ENCODE measurements at regions of chr19 and their contacts with region 1.

Region 1: DNA sequence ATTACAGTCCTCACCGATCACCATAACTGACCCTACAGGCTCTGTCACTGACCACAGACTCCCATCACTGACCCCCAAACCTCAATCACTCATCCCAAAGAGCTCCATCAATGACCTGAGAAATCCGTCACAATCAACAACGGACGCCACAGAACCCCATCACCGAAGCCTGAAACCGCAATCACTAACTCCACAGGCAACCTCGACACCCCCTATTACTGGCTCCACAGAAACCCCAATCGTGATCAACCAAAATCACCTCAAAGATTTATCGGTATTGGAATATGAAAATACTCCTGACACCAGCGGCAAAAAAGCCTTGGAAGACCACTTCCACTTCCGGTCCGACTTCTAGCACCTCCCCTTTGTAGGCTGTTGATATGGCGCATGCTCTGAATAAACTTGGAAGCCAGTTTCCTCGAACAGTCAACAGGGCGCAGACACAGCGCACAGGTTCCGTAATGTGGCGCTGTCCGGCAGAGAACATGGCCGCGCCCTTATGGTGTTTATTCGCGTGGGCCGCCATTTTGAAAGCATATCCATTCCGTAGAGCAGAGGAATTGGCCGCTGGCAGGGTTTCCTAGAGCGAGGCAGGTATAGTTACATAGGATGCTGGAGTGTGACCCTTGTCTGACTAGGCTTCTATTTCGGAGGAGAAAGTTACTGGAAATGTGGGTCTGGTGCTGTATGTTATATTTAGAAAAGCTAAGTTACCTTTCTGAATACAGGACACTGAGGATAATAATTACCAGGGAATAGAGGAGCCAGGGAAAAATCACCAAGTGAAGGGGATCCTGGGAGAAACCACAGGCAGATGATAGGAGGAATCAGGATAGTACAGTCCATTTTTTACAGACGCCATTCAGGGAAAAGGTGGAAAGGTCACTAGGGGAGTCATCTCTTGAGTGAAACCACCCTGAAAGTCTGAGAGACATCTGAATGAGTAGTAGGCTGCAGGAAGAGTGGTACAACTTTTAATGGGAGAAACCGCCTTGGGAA is at the start of gene ZNF585A:
- DNase-seq: peak; percentile 94
- H3K4me3 Mint-ChIP-seq: no peak within 1 kb of the TSS
- H3K27ac Mint-ChIP-seq: no peak within 1 kb of the TSS
- H3K4me1 Mint-ChIP-seq: no peaks in the 10 kb centered on the region
- H3K27me3 Mint-ChIP-seq: no peaks in the 10 kb centered on the region
- total RNA-seq, gene ZNF585A: 2.7 and 3.9 TPM in 2 replicates

Region 2: GRCh38 chr19:36973021-36973843 is 199.4 kb before region 1 on chr19:
- intact Hi-C with region 1: loop called (anchors 1 kb)
- DNase-seq: peak; percentile 92
- H3K4me3 Mint-ChIP-seq: peak overlapping the region; percentile 99
- H3K27ac Mint-ChIP-seq: peak overlapping the region; percentile 92
- H3K4me1 Mint-ChIP-seq: peaks cover 12% of the 10 kb centered on the region
- H3K27me3 Mint-ChIP-seq: no peaks in the 10 kb centered on the region

Region 3: DNA sequence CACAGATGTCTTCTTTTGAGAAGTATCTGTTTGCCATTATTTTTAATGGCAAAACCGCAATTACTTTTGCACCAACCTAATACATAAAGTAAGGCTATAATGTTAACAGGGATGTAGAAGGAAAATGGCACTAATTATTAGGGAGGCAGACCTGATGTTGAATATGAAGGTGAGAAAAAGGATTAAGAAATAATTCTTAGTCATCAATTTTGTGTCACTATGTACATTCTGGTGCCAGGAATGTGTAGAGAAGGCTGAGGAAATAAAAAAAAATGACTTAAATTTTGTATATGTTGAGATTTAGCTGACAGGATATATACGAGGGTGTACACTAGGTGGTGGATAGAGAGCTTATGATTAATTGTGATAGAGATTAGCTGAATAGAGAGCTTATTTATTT is 25.1 kb after region 1 on chr19:
- intact Hi-C with region 1: no loop called
- DNase-seq: no peak
- H3K4me3 Mint-ChIP-seq: no peak overlapping the region
- H3K27ac Mint-ChIP-seq: no peak overlapping the region
- H3K4me1 Mint-ChIP-seq: no peaks in the 10 kb centered on the region
- H3K27me3 Mint-ChIP-seq: no peaks in the 10 kb centered on the region

Region 4: DNA sequence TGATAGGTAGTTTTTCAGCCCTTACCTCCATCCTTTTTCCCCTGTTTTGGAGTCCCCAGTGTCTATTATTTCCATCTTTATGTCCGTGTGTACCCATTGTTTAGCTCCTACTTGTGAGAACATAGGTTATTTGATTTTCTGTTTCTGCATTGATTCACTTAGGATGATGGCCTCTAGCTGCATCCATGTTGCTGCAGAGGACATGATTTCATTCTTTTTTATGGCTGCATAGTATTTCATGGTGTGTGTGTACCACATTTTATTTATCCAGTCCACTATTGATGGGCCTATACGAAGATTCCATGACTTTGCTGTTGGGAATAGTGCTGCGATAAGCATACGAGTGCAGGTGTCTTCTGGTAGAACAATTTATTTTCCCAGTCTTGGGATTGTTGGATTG is 183.2 kb after region 1 on chr19:
- intact Hi-C with region 1: no loop called
- DNase-seq: no peak
- H3K4me3 Mint-ChIP-seq: no peak overlapping the region
- H3K27ac Mint-ChIP-seq: no peak overlapping the region
- H3K4me1 Mint-ChIP-seq: no peaks in the 10 kb centered on the region
- H3K27me3 Mint-ChIP-seq: no peaks in the 10 kb centered on the region